ENCODE measurements at regions of chr11 and their contacts with region 1.

Region 1: GRCh38 chr11:64652586-64653387 is 61.8 kb downstream of the SLC22A12 start:
- DNase-seq: peak in 9 of 10 donors; percentile 69 to 87 (median 84)
- H3K4me3 ChIP-seq: no peak overlapping the region
- H3K27ac ChIP-seq: peak overlapping the region in 38 of 59 donors; percentile 0 to 73 (median 40)
- H3K27me3 ChIP-seq: no peaks in the 10 kb centered on the region
- CTCF ChIP-seq: peak; percentile 66 to 95 (median 90)

Region 2: GRCh38 chr11:64358907-64359711 is 293.7 kb before region 1 on chr11 and contains the start of gene RPS6KA4:
- intact Hi-C with region 1: loop called in 1 of 2 experiments (anchors 5 kb)
- DNase-seq: peak in 6 of 10 donors; percentile 15 to 82 (median 64)
- H3K4me3 ChIP-seq: peak within 1 kb of the TSS; percentile 58 to 98 (median 90)
- H3K27ac ChIP-seq: peak within 1 kb of the TSS; percentile 33 to 98 (median 91)
- H3K27me3 ChIP-seq: no peaks in the 10 kb centered on the region
- CTCF ChIP-seq: peak in 11 of 56 donors; percentile 10 to 29 (median 17)
- total RNA-seq, gene RPS6KA4: 22.6 to 49.3 (median 33.0) TPM

Region 3: GRCh38 chr11:64489831-64490441 is 162.9 kb before region 1 on chr11:
- intact Hi-C with region 1: loop called in 1 of 2 experiments (anchors 5 kb)
- DNase-seq: peak; percentile 46 to 85 (median 72)
- H3K4me3 ChIP-seq: peak overlapping the region in 9 of 59 donors; percentile 2 to 29 (median 24)
- H3K27ac ChIP-seq: no peak overlapping the region
- H3K27me3 ChIP-seq: peaks cover 0 to 4% (median 0%) of the 10 kb centered on the region in 45 donors
- CTCF ChIP-seq: peak; percentile 47 to 84 (median 75)

Region 4: GRCh38 chr11:64609436-64610047 is 43.2 kb before region 1 on chr11:
- intact Hi-C with region 1: no loop called
- DNase-seq: no peak
- H3K4me3 ChIP-seq: no peak overlapping the region
- H3K27ac ChIP-seq: peak overlapping the region in 3 of 59 donors; percentile 13 to 80 (median 59)
- H3K27me3 ChIP-seq: no peaks in the 10 kb centered on the region
- CTCF ChIP-seq: no peak

Region 5: GRCh38 chr11:64638018-64638665 is 14.6 kb before region 1 on chr11:
- intact Hi-C with region 1: no loop called
- DNase-seq: peak in 2 of 10 donors; percentile 46 to 49
- H3K4me3 ChIP-seq: peak overlapping the region in 58 of 59 donors; percentile 11 to 79 (median 64)
- H3K27ac ChIP-seq: peak overlapping the region in 45 of 59 donors; percentile 7 to 85 (median 58)
- H3K27me3 ChIP-seq: peaks cover 0 to 3% (median 0%) of the 10 kb centered on the region in 45 donors
- CTCF ChIP-seq: no peak

Region 6: GRCh38 chr11:64688534-64688982 is 35.8 kb after region 1 on chr11:
- intact Hi-C with region 1: loop called (anchors 2 to 5 kb)
- DNase-seq: peak; percentile 87 to 95 (median 92)
- H3K4me3 ChIP-seq: peak overlapping the region; percentile 16 to 70 (median 51)
- H3K27ac ChIP-seq: peak overlapping the region; percentile 71 to 100 (median 97)
- H3K27me3 ChIP-seq: no peaks in the 10 kb centered on the region
- CTCF ChIP-seq: peak; percentile 88 to 99 (median 97)

Measured in dorsolateral prefrontal cortex (tissue), 120 donors.